CD4-positive, alpha-beta T cell (primary cell): ENCODE measurements at regions of chr2 and their contacts with region 1.

Region 1: DNA sequence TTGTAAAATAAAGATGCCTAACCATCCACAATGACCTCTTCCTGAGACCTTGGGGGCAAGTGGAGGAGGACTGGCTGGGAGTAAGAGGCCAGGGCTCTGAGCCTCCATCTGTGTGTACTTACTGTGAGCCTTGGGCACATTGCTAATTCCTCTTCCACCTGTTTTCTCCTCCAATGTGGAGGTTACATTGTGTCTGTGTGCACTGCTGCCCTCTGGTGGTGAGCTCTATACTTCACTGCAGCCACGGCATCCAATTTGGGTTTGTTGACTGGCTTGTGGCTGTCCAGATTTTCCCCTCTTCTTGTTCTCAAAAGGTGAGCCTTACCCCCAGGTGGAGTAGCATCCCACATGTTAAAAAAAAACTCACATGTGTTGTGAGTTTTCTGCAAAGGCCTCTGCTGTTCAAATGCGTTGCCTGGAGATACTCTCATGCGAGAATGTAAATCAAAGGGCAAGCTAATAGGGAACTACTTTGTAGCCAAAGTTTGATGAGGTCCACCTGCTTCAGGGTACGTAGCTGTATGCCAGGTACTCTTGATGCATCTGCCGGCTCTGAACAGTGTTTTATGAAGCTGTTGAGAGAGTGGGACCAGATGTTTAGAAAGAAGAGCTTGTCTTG is 80.8 kb downstream of the APOB start:
- DNase-seq: peak; percentile 45 to 80 (median 60)
- ATAC-seq: peak; percentile 58
- H3K4me3 ChIP-seq: no peak overlapping the region
- H3K4me3 Mint-ChIP-seq: no peak overlapping the region
- H3K27ac ChIP-seq: no peak overlapping the region
- H3K27ac Mint-ChIP-seq: no peak overlapping the region
- H3K4me1 ChIP-seq: no peaks in the 10 kb centered on the region
- H3K4me1 Mint-ChIP-seq: no peaks in the 10 kb centered on the region
- H3K27me3 ChIP-seq: peaks cover 3 to 5% of the 10 kb centered on the region in 2 experiments
- H3K27me3 Mint-ChIP-seq: peaks cover 55% of the 10 kb centered on the region
- CTCF ChIP-seq: peak; percentile 83

Region 2: GRCh38 chr2:20446917-20447436 is 516.1 kb before region 1 on chr2 and contains the start of gene RHOB:
- CTCF ChIA-PET with region 1: interaction called, 3 read pairs
- POLR2A ChIA-PET with region 1: no interaction called
- intact Hi-C with region 1: loop called in 1 of 2 experiments (anchors 5 kb)
- DNase-seq: peak; percentile 62 to 97 (median 81)
- ATAC-seq: peak; percentile 96
- H3K4me3 ChIP-seq: peak within 1 kb of the TSS; percentile 65
- H3K4me3 Mint-ChIP-seq: peak within 1 kb of the TSS; percentile 86
- H3K27ac ChIP-seq: no peak within 1 kb of the TSS
- H3K27ac Mint-ChIP-seq: no peak within 1 kb of the TSS
- H3K4me1 ChIP-seq: peaks cover 16% of the 10 kb centered on the region
- H3K4me1 Mint-ChIP-seq: no peaks in the 10 kb centered on the region
- H3K27me3 ChIP-seq: peaks cover 10 to 22% of the 10 kb centered on the region in 2 experiments
- H3K27me3 Mint-ChIP-seq: peaks cover 31% of the 10 kb centered on the region
- CTCF ChIP-seq: no peak
- total RNA-seq, gene RHOB: 25.9 to 26.6 TPM

Region 3: GRCh38 chr2:20661067-20661980 is 301.7 kb before region 1 on chr2:
- CTCF ChIA-PET with region 1: interaction called, 40 read pairs
- POLR2A ChIA-PET with region 1: interaction called, 11 read pairs
- intact Hi-C with region 1: loop called (anchors 1 kb)
- DNase-seq: peak; percentile 43 to 85 (median 56)
- ATAC-seq: peak; percentile 84
- H3K4me3 ChIP-seq: no peak overlapping the region
- H3K4me3 Mint-ChIP-seq: no peak overlapping the region
- H3K27ac ChIP-seq: no peak overlapping the region
- H3K27ac Mint-ChIP-seq: no peak overlapping the region
- H3K4me1 ChIP-seq: peaks cover 18% of the 10 kb centered on the region
- H3K4me1 Mint-ChIP-seq: peaks cover 13% of the 10 kb centered on the region
- H3K27me3 ChIP-seq: peaks cover 46 to 62% of the 10 kb centered on the region in 2 experiments
- H3K27me3 Mint-ChIP-seq: peaks cover 78% of the 10 kb centered on the region
- CTCF ChIP-seq: peak; percentile 93

Region 4: DNA sequence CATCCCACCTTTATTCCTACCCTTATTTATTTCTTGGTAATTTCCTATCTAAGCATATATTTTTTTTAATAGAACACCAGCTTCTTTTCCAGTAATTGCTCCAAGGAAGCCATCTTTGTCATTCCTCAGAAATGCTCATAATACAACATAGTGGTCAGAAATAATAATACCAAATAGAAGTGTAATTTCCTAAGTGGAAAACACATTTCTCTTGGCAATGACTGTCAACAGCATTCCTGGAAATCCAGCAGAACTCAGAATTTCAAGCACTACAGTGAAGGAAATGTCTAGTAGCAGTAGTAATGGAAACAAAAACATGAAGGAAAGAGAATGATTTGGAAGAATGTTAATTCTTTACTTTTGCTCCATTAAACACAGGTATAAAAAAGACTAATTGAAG is 239.5 kb before region 1 on chr2:
- CTCF ChIA-PET with region 1: no interaction called
- POLR2A ChIA-PET with region 1: no interaction called
- intact Hi-C with region 1: loop called in 1 of 2 experiments (anchors 5 kb)
- DNase-seq: no peak
- ATAC-seq: no peak
- H3K4me3 ChIP-seq: no peak overlapping the region
- H3K4me3 Mint-ChIP-seq: no peak overlapping the region
- H3K27ac ChIP-seq: no peak overlapping the region
- H3K27ac Mint-ChIP-seq: no peak overlapping the region
- H3K4me1 ChIP-seq: no peaks in the 10 kb centered on the region
- H3K4me1 Mint-ChIP-seq: peaks cover 7% of the 10 kb centered on the region
- H3K27me3 ChIP-seq: no peaks in the 10 kb centered on the region
- H3K27me3 Mint-ChIP-seq: no peaks in the 10 kb centered on the region
- CTCF ChIP-seq: no peak

Region 5: GRCh38 chr2:20781656-20782265 is 181.3 kb before region 1 on chr2:
- CTCF ChIA-PET with region 1: interaction called, 16 read pairs
- POLR2A ChIA-PET with region 1: no interaction called
- intact Hi-C with region 1: loop called (anchors 1 to 2 kb)
- DNase-seq: peak in 5 of 14 experiments; percentile 3 to 39 (median 29)
- ATAC-seq: no peak
- H3K4me3 ChIP-seq: no peak overlapping the region
- H3K4me3 Mint-ChIP-seq: no peak overlapping the region
- H3K27ac ChIP-seq: no peak overlapping the region
- H3K27ac Mint-ChIP-seq: no peak overlapping the region
- H3K4me1 ChIP-seq: no peaks in the 10 kb centered on the region
- H3K4me1 Mint-ChIP-seq: no peaks in the 10 kb centered on the region
- H3K27me3 ChIP-seq: no peaks in the 10 kb centered on the region
- H3K27me3 Mint-ChIP-seq: no peaks in the 10 kb centered on the region
- CTCF ChIP-seq: peak; percentile 46